Body of pancreas (tissue), 4 donors: ENCODE measurements at regions of chr9 and their contacts with region 1.

Region 1: GRCh38 chr9:133009906-133010582 is 20.8 kb upstream of the GTF3C5 start:
- DNase-seq: no peak
- ATAC-seq: no peak
- H3K4me3 ChIP-seq: no peak overlapping the region
- H3K27ac ChIP-seq: no peak overlapping the region
- H3K4me1 ChIP-seq: no peaks in the 10 kb centered on the region
- H3K27me3 ChIP-seq: no peaks in the 10 kb centered on the region
- CTCF ChIP-seq: no peak
- POLR2A ChIP-seq: no peak

Region 2: DNA sequence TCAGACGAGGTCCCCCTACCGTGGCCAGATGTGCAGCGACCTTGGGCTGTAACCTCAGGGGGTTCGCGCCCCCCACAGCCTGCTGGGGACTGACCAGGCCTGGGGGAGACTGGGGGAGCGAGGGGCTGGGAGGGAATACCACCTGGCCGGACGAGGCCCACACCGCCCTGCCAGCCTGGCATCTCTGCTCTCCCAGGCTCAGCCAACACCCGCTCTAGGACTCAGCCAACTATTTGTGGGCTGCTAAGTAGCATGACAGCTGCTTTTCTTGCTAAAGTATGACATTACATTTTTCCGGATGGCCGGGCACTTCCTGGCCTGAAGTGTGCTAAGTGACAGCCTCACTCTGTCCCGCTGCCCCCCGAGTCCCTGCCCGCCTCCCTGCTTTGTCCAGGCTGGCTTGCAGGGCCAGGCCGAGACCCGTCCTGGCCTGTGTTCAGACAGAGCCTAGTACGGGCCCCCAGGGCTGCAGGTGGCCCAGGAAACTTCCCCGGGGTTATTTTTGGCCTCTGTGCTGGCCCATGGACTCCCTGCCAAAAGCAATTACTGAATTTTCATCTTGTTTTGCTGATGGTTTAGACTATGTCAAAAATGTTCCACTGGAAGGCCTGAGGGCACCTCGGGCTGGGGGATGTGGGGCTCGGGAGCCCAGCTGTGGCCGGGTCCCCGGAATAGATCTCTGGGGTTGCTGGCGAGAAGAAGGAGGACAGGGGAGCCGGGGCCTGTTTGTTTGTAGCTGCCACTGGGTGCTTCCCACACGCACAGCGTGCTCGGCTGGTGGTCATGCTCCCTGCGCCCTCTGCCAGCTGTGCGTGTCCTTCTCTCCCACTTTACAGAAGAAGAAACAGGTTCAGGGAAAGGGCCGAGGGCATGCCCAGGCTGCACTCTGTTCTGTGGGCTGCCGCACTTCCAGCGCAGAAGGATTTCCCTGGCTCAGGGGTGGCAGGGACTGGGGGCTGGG is 482.3 kb after region 1 on chr9:
- intact Hi-C with region 1: loop called (anchors 10 kb)
- DNase-seq: no peak
- ATAC-seq: peak; percentile 40
- H3K4me3 ChIP-seq: no peak overlapping the region
- H3K27ac ChIP-seq: peak overlapping the region in 3 of 4 donors; percentile 21 to 62 (median 39)
- H3K4me1 ChIP-seq: peaks cover 9% of the 10 kb centered on the region
- H3K27me3 ChIP-seq: no peaks in the 10 kb centered on the region
- CTCF ChIP-seq: no peak
- POLR2A ChIP-seq: no peak